ENCODE measurements at regions of chr6 and their contacts with region 1.

Region 1: GRCh38 chr6:118523216-118523615 is 24.9 kb upstream of the PLN start:
- DNase-seq: no peak
- ATAC-seq: no peak
- H3K4me3 ChIP-seq: no peak overlapping the region
- H3K4me3 Mint-ChIP-seq: no peak overlapping the region
- H3K27ac ChIP-seq: no peak overlapping the region
- H3K27ac Mint-ChIP-seq: no peak overlapping the region
- H3K4me1 ChIP-seq: no peaks in the 10 kb centered on the region
- H3K4me1 Mint-ChIP-seq: peaks cover 17 to 53% (median 48%) of the 10 kb centered on the region in 7 donors
- H3K27me3 ChIP-seq: no peaks in the 10 kb centered on the region
- H3K27me3 Mint-ChIP-seq: no peaks in the 10 kb centered on the region

Region 2: GRCh38 chr6:118387764-118388701 is 135.2 kb before region 1 on chr6:
- CTCF ChIA-PET with region 1: no interaction called
- POLR2A ChIA-PET with region 1: no interaction called
- intact Hi-C with region 1: no loop called
- DNase-seq: no peak
- ATAC-seq: no peak
- H3K4me3 ChIP-seq: no peak overlapping the region
- H3K4me3 Mint-ChIP-seq: no peak overlapping the region
- H3K27ac ChIP-seq: no peak overlapping the region
- H3K27ac Mint-ChIP-seq: no peak overlapping the region
- H3K4me1 ChIP-seq: no peaks in the 10 kb centered on the region
- H3K4me1 Mint-ChIP-seq: peaks cover 0 to 9% (median 4%) of the 10 kb centered on the region in 7 donors
- H3K27me3 ChIP-seq: no peaks in the 10 kb centered on the region
- H3K27me3 Mint-ChIP-seq: no peaks in the 10 kb centered on the region

Region 3: GRCh38 chr6:118495485-118496280 is 27.5 kb before region 1 on chr6:
- CTCF ChIA-PET with region 1: no interaction called
- POLR2A ChIA-PET with region 1: no interaction called
- intact Hi-C with region 1: no loop called
- DNase-seq: no peak
- ATAC-seq: no peak
- H3K4me3 ChIP-seq: no peak overlapping the region
- H3K4me3 Mint-ChIP-seq: no peak overlapping the region
- H3K27ac ChIP-seq: no peak overlapping the region
- H3K27ac Mint-ChIP-seq: peak overlapping the region in 1 of 9 donors; percentile 14
- H3K4me1 ChIP-seq: no peaks in the 10 kb centered on the region
- H3K4me1 Mint-ChIP-seq: peaks cover 2 to 42% (median 25%) of the 10 kb centered on the region in 7 donors
- H3K27me3 ChIP-seq: no peaks in the 10 kb centered on the region
- H3K27me3 Mint-ChIP-seq: no peaks in the 10 kb centered on the region

Region 4: GRCh38 chr6:118509009-118509617 is 14.1 kb before region 1 on chr6:
- CTCF ChIA-PET with region 1: interaction called, 4 read pairs
- POLR2A ChIA-PET with region 1: no interaction called
- intact Hi-C with region 1: loop called in 1 of 2 experiments (anchors 2 kb)
- DNase-seq: no peak
- ATAC-seq: no peak
- H3K4me3 ChIP-seq: no peak overlapping the region
- H3K4me3 Mint-ChIP-seq: no peak overlapping the region
- H3K27ac ChIP-seq: no peak overlapping the region
- H3K27ac Mint-ChIP-seq: peak overlapping the region in 2 of 9 donors; percentile 22 to 25
- H3K4me1 ChIP-seq: no peaks in the 10 kb centered on the region
- H3K4me1 Mint-ChIP-seq: peaks cover 7 to 54% (median 35%) of the 10 kb centered on the region in 7 donors
- H3K27me3 ChIP-seq: no peaks in the 10 kb centered on the region
- H3K27me3 Mint-ChIP-seq: no peaks in the 10 kb centered on the region

Region 5: DNA sequence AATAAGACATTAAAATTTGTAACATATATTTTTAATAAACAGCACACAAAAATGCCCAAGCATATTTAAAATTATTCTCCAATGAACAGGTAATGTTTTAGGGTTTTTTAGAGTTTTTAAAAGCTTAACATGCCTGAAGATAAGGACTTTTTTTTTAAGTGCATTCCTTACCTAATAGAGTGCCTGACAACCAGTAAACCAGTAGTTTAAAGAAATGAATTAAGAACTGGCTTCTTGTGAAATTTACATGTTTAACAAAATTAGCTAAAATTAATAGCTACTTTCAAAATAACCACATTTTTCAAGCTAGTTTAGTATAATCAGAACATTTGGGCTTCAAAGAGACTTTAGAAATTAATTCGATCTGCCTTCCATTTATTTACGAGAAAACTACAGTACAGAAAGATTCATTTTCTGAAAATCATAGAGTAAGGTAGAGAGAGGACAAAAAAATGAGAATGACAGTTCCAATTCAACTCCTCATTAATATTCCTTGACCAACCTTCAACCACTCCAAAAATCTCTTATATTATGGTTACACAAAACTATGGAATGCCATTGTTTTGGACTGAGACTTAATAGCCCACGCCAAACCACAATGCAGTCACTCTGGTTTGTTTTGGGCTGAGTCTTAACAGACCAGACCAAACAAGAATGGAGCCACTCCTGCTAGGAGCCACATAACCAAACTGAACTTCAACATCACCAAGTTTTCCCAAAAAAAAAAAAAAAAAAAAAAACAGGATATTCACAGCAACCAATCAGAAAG is 19.2 kb after region 1 on chr6:
- CTCF ChIA-PET with region 1: interaction called, 3 read pairs
- POLR2A ChIA-PET with region 1: no interaction called
- intact Hi-C with region 1: loop called in 1 of 2 experiments (anchors 2 kb)
- DNase-seq: no peak
- ATAC-seq: no peak
- H3K4me3 ChIP-seq: no peak overlapping the region
- H3K4me3 Mint-ChIP-seq: peak overlapping the region in 1 of 10 donors; percentile 41
- H3K27ac ChIP-seq: no peak overlapping the region
- H3K27ac Mint-ChIP-seq: peak overlapping the region in 3 of 9 donors; percentile 8 to 68 (median 60)
- H3K4me1 ChIP-seq: peaks cover 0 to 8% of the 10 kb centered on the region in 2 donors
- H3K4me1 Mint-ChIP-seq: peaks cover 10 to 82% (median 67%) of the 10 kb centered on the region in 7 donors
- H3K27me3 ChIP-seq: no peaks in the 10 kb centered on the region
- H3K27me3 Mint-ChIP-seq: no peaks in the 10 kb centered on the region